CD14-positive monocyte (primary cell): ENCODE measurements at regions of chr22 and their contacts with region 1.

Region 1: DNA sequence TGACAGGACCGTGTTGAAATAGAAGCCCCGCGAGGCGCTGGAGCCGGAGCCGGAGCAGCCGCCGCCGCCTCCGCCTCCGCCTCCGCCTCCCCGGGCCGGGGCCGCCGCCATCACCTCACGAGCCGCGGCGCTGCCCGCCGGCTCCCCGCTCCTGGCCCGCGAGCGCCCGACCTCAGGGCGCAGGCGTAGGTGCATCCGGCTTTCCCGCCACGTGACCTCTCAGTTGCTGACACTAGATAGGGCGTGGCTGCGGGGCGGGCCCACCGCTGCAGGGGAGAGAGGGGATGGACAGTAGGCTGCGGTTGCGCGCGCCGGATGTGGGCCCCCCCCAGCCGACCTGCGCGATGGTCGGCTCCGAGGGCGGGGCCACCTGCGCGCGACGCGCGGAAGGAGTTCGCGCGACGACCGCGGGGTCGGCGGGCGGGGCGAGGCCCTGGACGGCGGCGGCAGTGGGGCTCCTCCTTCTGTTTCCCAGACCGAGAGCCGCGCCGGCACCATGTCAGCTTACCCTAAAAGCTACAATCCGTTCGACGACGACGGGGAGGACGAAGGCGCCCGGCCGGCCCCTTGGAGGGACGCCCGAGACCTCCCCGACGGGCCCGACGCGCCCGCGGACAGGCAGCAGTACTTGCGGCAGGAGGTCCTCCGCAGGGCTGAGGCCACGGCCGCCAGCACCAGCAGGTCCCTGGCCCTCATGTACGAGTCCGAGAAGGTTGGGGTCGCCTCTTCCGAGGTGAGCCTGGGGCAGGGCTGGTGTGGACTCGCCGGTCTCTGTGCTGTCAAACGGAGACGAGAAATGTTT is at the starts of genes PI4KA and SNAP29:
- DNase-seq: peak; percentile 97 to 99 (median 98)
- H3K4me3 ChIP-seq: peak within 1 kb of the TSS; percentile 74 to 92 (median 74)
- H3K4me3 Mint-ChIP-seq: peak within 1 kb of the TSS; percentile 93 to 95
- H3K27ac ChIP-seq: peak within 1 kb of the TSS; percentile 64 to 91
- H3K27ac Mint-ChIP-seq: peak within 1 kb of the TSS; percentile 88 to 95 (median 91)
- H3K4me1 ChIP-seq: peaks cover 52 to 62% of the 10 kb centered on the region in 2 donors
- H3K4me1 Mint-ChIP-seq: peaks cover 61% of the 10 kb centered on the region
- H3K27me3 ChIP-seq: no peaks in the 10 kb centered on the region
- H3K27me3 Mint-ChIP-seq: peaks cover 0 to 2% (median 1%) of the 10 kb centered on the region in 3 donors
- CTCF ChIP-seq: no peak
- polyA plus RNA-seq, gene PI4KA: 22.8 to 74.4 (median 38.2) TPM
- polyA plus RNA-seq, gene SNAP29: 22.3 to 32.8 (median 28.9) TPM

Region 2: GRCh38 chr22:21001560-21002325 is 142.9 kb after region 1 on chr22 and contains the start of gene THAP7:
- intact Hi-C with region 1: loop called in 1 of 2 experiments (anchors 5 kb)
- DNase-seq: peak; percentile 95 to 98 (median 97)
- H3K4me3 ChIP-seq: peak within 1 kb of the TSS; percentile 53 to 79 (median 66)
- H3K4me3 Mint-ChIP-seq: peak within 1 kb of the TSS; percentile 84 to 94
- H3K27ac ChIP-seq: peak within 1 kb of the TSS; percentile 91 to 95
- H3K27ac Mint-ChIP-seq: peak within 1 kb of the TSS; percentile 95 to 99 (median 98)
- H3K4me1 ChIP-seq: peaks cover 24 to 30% of the 10 kb centered on the region in 2 donors
- H3K4me1 Mint-ChIP-seq: peaks cover 26% of the 10 kb centered on the region
- H3K27me3 ChIP-seq: no peaks in the 10 kb centered on the region
- H3K27me3 Mint-ChIP-seq: peaks cover 0 to 5% (median 1%) of the 10 kb centered on the region in 3 donors
- CTCF ChIP-seq: no peak
- polyA plus RNA-seq, gene THAP7: 18.4 to 22.9 (median 19.8) TPM

Region 3: GRCh38 chr22:21014202-21014725 is 155.4 kb after region 1 on chr22:
- intact Hi-C with region 1: no loop called
- DNase-seq: peak; percentile 85 to 89 (median 88)
- H3K4me3 ChIP-seq: peak overlapping the region; percentile 7 to 73 (median 27)
- H3K4me3 Mint-ChIP-seq: peak overlapping the region; percentile 78 to 92
- H3K27ac ChIP-seq: no peak overlapping the region
- H3K27ac Mint-ChIP-seq: peak overlapping the region; percentile 21 to 92 (median 79)
- H3K4me1 ChIP-seq: peaks cover 15 to 19% of the 10 kb centered on the region in 2 donors
- H3K4me1 Mint-ChIP-seq: peaks cover 13% of the 10 kb centered on the region
- H3K27me3 ChIP-seq: peaks cover 0 to 14% of the 10 kb centered on the region in 2 donors
- H3K27me3 Mint-ChIP-seq: peaks cover 9 to 42% (median 13%) of the 10 kb centered on the region in 3 donors
- CTCF ChIP-seq: no peak